ENCODE measurements at regions of chr1 and their contacts with region 1.

Region 1: GRCh38 chr1:151156515-151156819 is at the start of gene TNFAIP8L2:
- DNase-seq: peak; percentile 64 to 72 (median 64)
- H3K4me3 ChIP-seq: peak within 1 kb of the TSS; percentile 74 to 91 (median 91)
- H3K4me3 Mint-ChIP-seq: peak within 1 kb of the TSS; percentile 98
- H3K27ac ChIP-seq: peak within 1 kb of the TSS; percentile 60 to 79
- H3K27ac Mint-ChIP-seq: peak within 1 kb of the TSS; percentile 90 to 96 (median 95)
- H3K4me1 ChIP-seq: peaks cover 51 to 60% of the 10 kb centered on the region in 2 donors
- H3K4me1 Mint-ChIP-seq: peaks cover 49% of the 10 kb centered on the region
- H3K27me3 ChIP-seq: no peaks in the 10 kb centered on the region
- H3K27me3 Mint-ChIP-seq: peaks cover 0 to 7% (median 0%) of the 10 kb centered on the region in 3 donors
- CTCF ChIP-seq: no peak
- polyA plus RNA-seq, gene TNFAIP8L2: 50.3 to 104 (median 103) TPM

Region 2: GRCh38 chr1:151098126-151098525 is 58.3 kb before region 1 on chr1:
- intact Hi-C with region 1: loop called (anchors 2 kb)
- DNase-seq: no peak
- H3K4me3 ChIP-seq: no peak overlapping the region
- H3K4me3 Mint-ChIP-seq: no peak overlapping the region
- H3K27ac ChIP-seq: no peak overlapping the region
- H3K27ac Mint-ChIP-seq: no peak overlapping the region
- H3K4me1 ChIP-seq: no peaks in the 10 kb centered on the region
- H3K4me1 Mint-ChIP-seq: no peaks in the 10 kb centered on the region
- H3K27me3 ChIP-seq: no peaks in the 10 kb centered on the region
- H3K27me3 Mint-ChIP-seq: no peaks in the 10 kb centered on the region
- CTCF ChIP-seq: no peak

Measured in CD14-positive monocyte (primary cell).